GM10248 (cell line): ENCODE measurements at regions of chr11 and their contacts with region 1.

Region 1: GRCh38 chr11:122743949-122744348 is 88.4 kb downstream of the UBASH3B start:
- DNase-seq: peak; percentile 72
- CTCF ChIP-seq: no peak

Region 2: DNA sequence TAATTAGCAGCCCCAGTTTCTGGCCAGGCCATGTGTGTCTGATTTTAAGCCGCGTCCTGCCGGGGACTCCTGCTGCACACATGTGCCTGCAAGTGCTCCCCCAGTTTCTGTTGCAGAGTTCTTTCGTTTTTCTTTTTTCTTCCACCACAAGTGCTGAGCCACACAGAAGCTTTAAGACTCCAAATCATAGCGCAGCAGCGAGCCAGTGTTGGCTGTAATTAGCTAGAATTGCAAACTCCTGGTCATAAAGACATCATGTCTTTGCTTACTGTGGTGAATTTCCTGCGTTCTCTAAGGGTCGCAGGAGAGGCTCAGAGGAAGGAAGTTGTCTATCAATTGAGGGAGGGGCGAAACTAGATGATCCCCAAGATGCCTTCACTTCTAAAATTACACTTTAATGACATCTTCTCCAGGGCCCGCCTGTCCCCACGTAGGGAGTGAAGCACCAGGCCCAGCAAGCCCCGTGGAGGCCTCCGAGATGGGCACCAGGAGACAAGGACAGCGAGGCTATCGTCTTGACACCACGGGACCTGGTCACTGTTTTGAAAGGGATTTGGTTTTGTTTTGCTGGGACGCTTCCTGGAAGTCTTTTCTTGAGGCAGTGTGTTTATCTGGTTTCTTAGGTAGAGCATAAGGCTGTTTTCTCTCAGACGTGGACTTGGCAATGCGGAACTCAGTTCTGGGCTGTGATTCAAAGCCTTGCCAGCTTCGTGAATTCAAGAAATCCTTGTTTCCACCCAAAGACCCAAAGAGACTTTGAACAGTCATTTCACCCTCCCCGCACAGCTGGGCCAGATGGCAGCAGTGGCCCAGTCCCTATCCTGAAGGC is 16.6 kb before region 1 on chr11:
- CTCF ChIA-PET with region 1: interaction called, 22 read pairs
- POLR2A ChIA-PET with region 1: no interaction called
- DNase-seq: peak; percentile 66
- CTCF ChIP-seq: no peak

Region 3: GRCh38 chr11:122733318-122733717 is 10.6 kb before region 1 on chr11:
- CTCF ChIA-PET with region 1: interaction called, 22 read pairs
- POLR2A ChIA-PET with region 1: no interaction called
- DNase-seq: no peak
- CTCF ChIP-seq: no peak